ENCODE measurements at regions of chr10 and their contacts with region 1.

Region 1: GRCh38 chr10:63629363-63630084 is 108.3 kb downstream of the REEP3 start:
- DNase-seq: peak; percentile 90 to 96 (median 94)
- ATAC-seq: peak; percentile 66 to 89 (median 77)
- H3K4me3 ChIP-seq: peak overlapping the region; percentile 29 to 63 (median 56)
- H3K27ac ChIP-seq: peak overlapping the region; percentile 97 to 98 (median 98)
- H3K4me1 ChIP-seq: peaks cover 3 to 8% (median 8%) of the 10 kb centered on the region in 3 donors
- H3K27me3 ChIP-seq: no peaks in the 10 kb centered on the region
- CTCF ChIP-seq: peak; percentile 44 to 61 (median 56)

Region 2: GRCh38 chr10:63173468-63174232 is 455.9 kb before region 1 on chr10:
- intact Hi-C with region 1: loop called in 1 of 3 experiments (anchors 10 kb)
- DNase-seq: no peak
- ATAC-seq: peak in 1 of 4 donors; percentile 56
- H3K4me3 ChIP-seq: no peak overlapping the region
- H3K27ac ChIP-seq: no peak overlapping the region
- H3K4me1 ChIP-seq: peaks cover 0 to 7% (median 4%) of the 10 kb centered on the region in 3 donors
- H3K27me3 ChIP-seq: no peaks in the 10 kb centered on the region
- CTCF ChIP-seq: no peak

Region 3: GRCh38 chr10:63521416-63522276 is 107.9 kb before region 1 on chr10:
- intact Hi-C with region 1: loop called in 1 of 3 experiments (anchors 5 kb)
- DNase-seq: peak; percentile 54 to 87 (median 68)
- ATAC-seq: peak; percentile 80 to 88 (median 84)
- H3K4me3 ChIP-seq: peak overlapping the region; percentile 50 to 76 (median 70)
- H3K27ac ChIP-seq: peak overlapping the region; percentile 93 to 98 (median 96)
- H3K4me1 ChIP-seq: peaks cover 6 to 14% (median 14%) of the 10 kb centered on the region in 3 donors
- H3K27me3 ChIP-seq: no peaks in the 10 kb centered on the region
- CTCF ChIP-seq: no peak

Region 4: GRCh38 chr10:63720072-63720537 is 90.6 kb after region 1 on chr10:
- intact Hi-C with region 1: loop called in 1 of 3 experiments (anchors 5 kb)
- DNase-seq: peak in 3 of 6 donors; percentile 43 to 69 (median 57)
- ATAC-seq: peak; percentile 89 to 96 (median 94)
- H3K4me3 ChIP-seq: no peak overlapping the region
- H3K27ac ChIP-seq: no peak overlapping the region
- H3K4me1 ChIP-seq: peaks cover 6 to 17% (median 10%) of the 10 kb centered on the region in 3 donors
- H3K27me3 ChIP-seq: no peaks in the 10 kb centered on the region
- CTCF ChIP-seq: peak; percentile 83 to 96 (median 93)